SK-N-SH (cell line): ENCODE measurements at regions of chr14 and their contacts with region 1.

Region 1: GRCh38 chr14:75654127-75654732 is 6.4 kb downstream of the ERG28 start:
- DNase-seq: peak; percentile 77
- H3K4me3 ChIP-seq: no peak overlapping the region; a peak in 1 of 4 replicates
- H3K27ac ChIP-seq: no peak overlapping the region
- H3K4me1 ChIP-seq: no peaks in the 10 kb centered on the region; a peak in 1 of 4 replicates
- H3K27me3 ChIP-seq: no peaks in the 10 kb centered on the region
- CTCF ChIP-seq: peak; percentile 96
- EP300 ChIP-seq: no peak
- RAD21 ChIP-seq: peak; percentile 91

Region 2: GRCh38 chr14:75604856-75605851 is 49.1 kb before region 1 on chr14:
- CTCF ChIA-PET with region 1: interaction called, 11 read pairs
- POLR2A ChIA-PET with region 1: no interaction called
- DNase-seq: no peak
- H3K4me3 ChIP-seq: no peak overlapping the region
- H3K27ac ChIP-seq: no peak overlapping the region
- H3K4me1 ChIP-seq: no peaks in the 10 kb centered on the region; a peak in 1 of 4 replicates
- H3K27me3 ChIP-seq: peaks cover 29% of the 10 kb centered on the region; the same call in 1 of the 2 replicates
- CTCF ChIP-seq: no peak
- EP300 ChIP-seq: no peak
- RAD21 ChIP-seq: no peak

Region 3: DNA sequence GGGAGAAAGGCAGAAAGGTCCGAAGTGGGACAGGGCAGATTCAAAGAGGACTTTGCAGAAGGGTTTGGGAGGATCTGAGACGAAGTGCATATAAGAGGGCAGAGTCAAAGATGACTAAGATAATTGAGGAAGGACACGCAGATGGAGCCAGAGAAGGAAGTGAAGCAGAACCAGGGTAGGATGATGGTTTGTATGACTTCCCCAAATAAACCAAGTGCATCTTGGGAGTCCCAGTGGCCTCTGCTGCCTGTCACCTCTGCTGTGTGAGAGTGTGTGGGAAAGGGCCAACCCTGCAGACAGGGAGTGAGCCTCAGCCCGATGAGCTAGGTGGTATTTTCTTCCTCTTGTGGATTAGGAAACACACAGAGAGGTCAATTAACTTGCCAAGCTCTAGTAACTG is 39.0 kb before region 1 on chr14:
- CTCF ChIA-PET with region 1: interaction called, 35 read pairs
- POLR2A ChIA-PET with region 1: no interaction called
- DNase-seq: no peak
- H3K4me3 ChIP-seq: no peak overlapping the region
- H3K27ac ChIP-seq: no peak overlapping the region
- H3K4me1 ChIP-seq: no peaks in the 10 kb centered on the region
- H3K27me3 ChIP-seq: peaks cover 33% of the 10 kb centered on the region
- CTCF ChIP-seq: no peak
- EP300 ChIP-seq: no peak
- RAD21 ChIP-seq: no peak

Region 4: DNA sequence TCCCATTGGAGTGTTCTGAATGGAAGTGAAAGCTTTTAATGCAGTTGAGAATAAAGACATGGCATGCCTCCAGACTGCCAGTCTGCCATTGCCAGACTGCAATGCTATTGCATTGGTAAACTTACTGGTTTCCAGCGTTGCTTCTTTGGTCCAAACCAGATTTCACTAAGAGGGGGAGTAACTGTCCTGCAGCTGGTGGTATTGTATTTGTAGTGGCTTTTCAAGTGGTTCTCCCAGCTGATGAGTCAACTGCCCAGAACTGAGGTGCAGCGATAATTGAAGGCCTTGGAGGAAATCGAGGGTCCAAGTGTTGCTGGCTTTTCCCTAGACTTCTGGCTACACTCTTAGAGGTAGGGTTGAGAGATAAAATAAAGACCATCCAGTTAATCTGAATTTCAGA is 25.4 kb before region 1 on chr14:
- CTCF ChIA-PET with region 1: interaction called, 41 read pairs
- POLR2A ChIA-PET with region 1: no interaction called
- DNase-seq: no peak
- H3K4me3 ChIP-seq: no peak overlapping the region
- H3K27ac ChIP-seq: no peak overlapping the region
- H3K4me1 ChIP-seq: no peaks in the 10 kb centered on the region
- H3K27me3 ChIP-seq: peaks cover 7% of the 10 kb centered on the region; the same call in 1 of the 2 replicates
- CTCF ChIP-seq: no peak
- EP300 ChIP-seq: no peak
- RAD21 ChIP-seq: no peak

Region 5: DNA sequence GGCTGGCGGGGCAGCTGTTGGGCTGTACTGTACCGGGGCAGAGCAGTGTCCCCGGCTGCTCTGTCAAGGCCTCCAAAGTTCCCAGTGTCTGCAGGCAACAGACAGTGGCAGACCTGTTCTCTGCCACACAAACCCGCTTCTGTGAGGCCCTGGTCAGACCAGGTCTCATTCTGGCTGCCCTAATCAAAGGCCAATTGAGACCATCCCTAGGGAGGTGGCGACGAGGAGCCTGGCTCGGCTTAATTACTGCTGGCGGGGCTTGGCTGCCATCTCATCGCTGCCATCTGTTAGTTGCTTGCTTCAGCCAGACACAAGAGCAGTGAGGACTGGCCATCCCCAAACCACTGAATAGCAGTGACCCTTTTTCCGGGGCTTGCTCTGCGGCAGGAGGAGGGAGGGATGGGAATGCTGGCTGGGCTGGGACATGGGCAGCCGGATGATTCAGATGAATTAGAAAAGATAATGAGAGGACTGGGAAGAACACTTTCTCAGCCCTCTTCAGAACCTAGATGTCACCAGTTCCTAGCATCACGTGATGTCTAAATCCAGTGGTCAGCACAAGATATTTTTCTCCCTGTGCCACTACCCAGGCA is 18.0 kb before region 1 on chr14:
- CTCF ChIA-PET with region 1: interaction called, 41 read pairs
- POLR2A ChIA-PET with region 1: no interaction called
- DNase-seq: peak; percentile 77
- H3K4me3 ChIP-seq: no peak overlapping the region
- H3K27ac ChIP-seq: peak overlapping the region in 1 of 2 experiments; percentile 94; a peak in 2 of 4 replicates
- H3K4me1 ChIP-seq: peaks cover 0 to 16% of the 10 kb centered on the region in 2 experiments; a peak in 2 of 4 replicates
- H3K27me3 ChIP-seq: peaks cover 4% of the 10 kb centered on the region; the same call in 1 of the 2 replicates
- CTCF ChIP-seq: no peak
- EP300 ChIP-seq: peak in 1 of 2 experiments; percentile 79; a peak in 2 of 4 replicates
- RAD21 ChIP-seq: no peak

Region 6: GRCh38 chr14:75642056-75642455 is 12.2 kb before region 1 on chr14:
- CTCF ChIA-PET with region 1: interaction called, 41 read pairs
- POLR2A ChIA-PET with region 1: no interaction called
- DNase-seq: no peak
- H3K4me3 ChIP-seq: no peak overlapping the region
- H3K27ac ChIP-seq: no peak overlapping the region
- H3K4me1 ChIP-seq: no peaks in the 10 kb centered on the region
- H3K27me3 ChIP-seq: no peaks in the 10 kb centered on the region
- CTCF ChIP-seq: no peak
- EP300 ChIP-seq: no peak
- RAD21 ChIP-seq: no peak

Region 7: DNA sequence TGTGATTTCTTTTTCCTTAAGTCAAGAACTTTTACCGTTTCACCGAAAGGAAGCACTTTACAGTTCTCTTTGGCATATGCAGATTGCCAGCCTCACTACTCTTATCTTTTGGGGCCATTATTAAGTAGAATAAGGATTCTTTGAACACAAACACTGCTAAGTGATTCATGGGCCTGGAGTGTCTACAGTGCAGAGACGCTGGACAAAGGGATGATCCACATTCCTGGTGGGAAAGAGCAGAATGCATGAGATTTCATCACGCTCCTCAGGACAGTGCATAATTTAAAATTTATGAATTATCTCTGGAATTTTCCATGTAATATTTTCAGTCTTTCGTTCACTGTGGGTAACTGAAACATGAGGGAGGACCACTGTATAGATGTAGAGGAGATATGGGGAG is 97.1 kb after region 1 on chr14:
- CTCF ChIA-PET with region 1: no interaction called
- POLR2A ChIA-PET with region 1: no interaction called
- DNase-seq: no peak
- H3K4me3 ChIP-seq: no peak overlapping the region
- H3K27ac ChIP-seq: peak overlapping the region in 1 of 2 experiments; percentile 71; a peak in 3 of 4 replicates
- H3K4me1 ChIP-seq: peaks cover 4 to 5% of the 10 kb centered on the region in 2 experiments; a peak in 2 of 4 replicates
- H3K27me3 ChIP-seq: no peaks in the 10 kb centered on the region
- CTCF ChIP-seq: no peak
- EP300 ChIP-seq: no peak
- RAD21 ChIP-seq: no peak

Region 8: GRCh38 chr14:75794615-75795038 is 140.4 kb after region 1 on chr14:
- CTCF ChIA-PET with region 1: no interaction called
- POLR2A ChIA-PET with region 1: no interaction called
- DNase-seq: peak; percentile 7
- H3K4me3 ChIP-seq: no peak overlapping the region; a peak in 1 of 4 replicates
- H3K27ac ChIP-seq: peak overlapping the region in 1 of 2 experiments; percentile 30; a peak in 2 of 4 replicates
- H3K4me1 ChIP-seq: no peaks in the 10 kb centered on the region; a peak in 1 of 4 replicates
- H3K27me3 ChIP-seq: no peaks in the 10 kb centered on the region
- CTCF ChIP-seq: peak; percentile 64
- EP300 ChIP-seq: no peak
- RAD21 ChIP-seq: peak; percentile 70

Region 9: GRCh38 chr14:75861161-75861621 is 207.0 kb after region 1 on chr14:
- CTCF ChIA-PET with region 1: no interaction called
- POLR2A ChIA-PET with region 1: no interaction called
- DNase-seq: no peak
- H3K4me3 ChIP-seq: no peak overlapping the region
- H3K27ac ChIP-seq: peak overlapping the region; percentile 19 to 52
- H3K4me1 ChIP-seq: peaks cover 0 to 34% of the 10 kb centered on the region in 2 experiments; a peak in 3 of 4 replicates
- H3K27me3 ChIP-seq: no peaks in the 10 kb centered on the region
- CTCF ChIP-seq: no peak
- EP300 ChIP-seq: peak in 1 of 2 experiments; percentile 65; a peak in 2 of 4 replicates
- RAD21 ChIP-seq: no peak